Activated CD4-positive, alpha-beta memory T cell treated with anti-CD3 and anti-CD28 coated beads, Interleukin-2, amount 10 ng/mL, durations not matched to agents 7 days and 5 days (primary cell): ENCODE measurements at regions of chr3 and their contacts with region 1.

Region 1: GRCh38 chr3:31531992-31532586 is 636 bp upstream of the STT3B start:
- DNase-seq: peak; percentile 99
- H3K4me3 Mint-ChIP-seq: no peak overlapping the region
- H3K27ac Mint-ChIP-seq: peak overlapping the region; percentile 96
- H3K4me1 Mint-ChIP-seq: peaks cover 11% of the 10 kb centered on the region
- H3K27me3 Mint-ChIP-seq: no peaks in the 10 kb centered on the region

Region 2: DNA sequence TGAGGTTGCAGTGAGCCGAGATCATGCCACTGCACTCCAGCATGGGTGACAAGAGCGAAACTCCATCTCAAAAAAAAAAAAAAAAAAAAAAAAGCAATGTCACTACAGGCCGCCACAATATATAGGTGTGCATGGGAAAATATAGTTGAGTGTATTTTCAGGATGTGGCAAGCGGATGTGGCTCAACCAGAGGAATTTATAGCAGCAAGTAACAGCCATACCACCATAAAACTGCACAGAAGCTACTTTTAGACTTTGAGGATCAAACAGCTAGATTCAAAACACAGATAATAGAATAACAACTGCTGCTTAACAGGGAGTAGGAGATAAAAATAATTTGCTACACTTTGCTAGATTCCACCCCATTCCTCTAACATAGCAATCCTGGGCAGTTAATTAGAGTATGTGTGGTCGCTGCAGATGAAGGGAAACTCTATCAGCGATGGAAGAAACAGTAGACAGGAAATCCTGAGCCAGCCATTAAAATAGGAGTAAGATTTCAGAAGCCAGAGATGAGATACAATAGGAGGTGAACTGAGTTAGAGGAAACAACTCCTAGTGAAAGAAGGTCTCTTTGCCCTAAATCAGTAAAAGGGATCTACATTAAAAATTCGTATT is 318.1 kb before region 1 on chr3:
- CTCF ChIA-PET with region 1: interaction called, 9 read pairs
- POLR2A ChIA-PET with region 1: interaction called, 34 read pairs
- DNase-seq: peak; percentile 78
- H3K4me3 Mint-ChIP-seq: peak overlapping the region; percentile 49
- H3K27ac Mint-ChIP-seq: peak overlapping the region; percentile 86
- H3K4me1 Mint-ChIP-seq: peaks cover 83% of the 10 kb centered on the region
- H3K27me3 Mint-ChIP-seq: no peaks in the 10 kb centered on the region

Region 3: GRCh38 chr3:31232055-31233025 is 299.7 kb before region 1 on chr3:
- CTCF ChIA-PET with region 1: interaction called, 21 read pairs
- POLR2A ChIA-PET with region 1: interaction called, 97 read pairs
- DNase-seq: no peak
- H3K4me3 Mint-ChIP-seq: no peak overlapping the region
- H3K27ac Mint-ChIP-seq: peak overlapping the region; percentile 57
- H3K4me1 Mint-ChIP-seq: peaks cover 65% of the 10 kb centered on the region
- H3K27me3 Mint-ChIP-seq: peaks cover 2% of the 10 kb centered on the region

Region 4: DNA sequence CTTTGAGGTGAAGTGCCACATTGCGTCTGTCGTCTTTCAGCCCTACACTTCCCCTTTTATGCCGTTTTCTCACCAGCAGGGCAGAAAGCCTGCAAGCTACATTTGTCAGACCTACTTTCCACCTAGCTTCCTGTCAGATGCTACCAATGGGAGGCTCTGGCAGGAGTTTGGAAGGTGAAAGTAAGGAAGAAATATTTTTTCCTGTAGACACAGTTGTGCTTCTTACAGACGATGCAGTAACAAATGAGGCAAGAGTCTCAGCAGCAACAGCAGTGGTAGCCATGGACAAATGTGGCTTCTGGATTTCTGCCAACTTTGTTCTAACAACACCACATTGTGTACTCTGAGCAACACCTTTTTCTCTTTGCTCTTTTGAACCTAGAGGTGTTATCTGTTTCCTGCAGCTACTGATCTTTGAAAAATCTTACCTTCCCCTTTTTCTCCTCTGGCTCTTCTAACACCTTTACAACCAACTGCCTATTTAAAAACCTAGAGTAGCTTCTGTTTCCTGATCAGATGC is 70.0 kb before region 1 on chr3:
- CTCF ChIA-PET with region 1: no interaction called
- POLR2A ChIA-PET with region 1: interaction called, 35 read pairs
- DNase-seq: peak; percentile 32
- H3K4me3 Mint-ChIP-seq: no peak overlapping the region
- H3K27ac Mint-ChIP-seq: peak overlapping the region; percentile 62
- H3K4me1 Mint-ChIP-seq: peaks cover 14% of the 10 kb centered on the region
- H3K27me3 Mint-ChIP-seq: no peaks in the 10 kb centered on the region

Region 5: GRCh38 chr3:31544634-31545033 is 12.5 kb after region 1 on chr3:
- CTCF ChIA-PET with region 1: interaction called, 10 read pairs
- POLR2A ChIA-PET with region 1: interaction called, 56 read pairs
- DNase-seq: no peak
- H3K4me3 Mint-ChIP-seq: no peak overlapping the region
- H3K27ac Mint-ChIP-seq: no peak overlapping the region
- H3K4me1 Mint-ChIP-seq: peaks cover 65% of the 10 kb centered on the region
- H3K27me3 Mint-ChIP-seq: no peaks in the 10 kb centered on the region

Region 6: DNA sequence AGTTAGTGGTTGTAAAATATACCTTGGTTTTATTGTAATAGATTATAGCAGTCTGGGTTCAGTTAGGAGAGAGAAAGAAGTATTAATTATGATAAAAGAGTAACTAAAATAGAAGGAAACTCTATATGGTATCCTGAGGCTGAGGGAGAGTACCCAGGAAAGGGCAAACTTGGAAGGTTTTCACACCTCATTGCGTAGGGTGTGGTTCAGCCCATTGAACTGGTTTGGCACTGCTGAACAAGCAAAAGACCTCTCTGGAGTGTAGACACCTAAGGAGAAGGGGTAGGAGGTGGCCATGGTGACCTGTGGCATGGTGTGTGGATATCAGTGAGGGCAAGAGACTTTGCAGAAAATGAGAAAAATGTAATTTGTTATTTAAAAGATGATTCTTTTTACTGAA is 64.1 kb after region 1 on chr3:
- CTCF ChIA-PET with region 1: interaction called, 3 read pairs
- POLR2A ChIA-PET with region 1: interaction called, 12 read pairs
- DNase-seq: no peak
- H3K4me3 Mint-ChIP-seq: no peak overlapping the region
- H3K27ac Mint-ChIP-seq: peak overlapping the region; percentile 24
- H3K4me1 Mint-ChIP-seq: peaks cover 42% of the 10 kb centered on the region
- H3K27me3 Mint-ChIP-seq: no peaks in the 10 kb centered on the region